HEK293 (cell line): ENCODE measurements at regions of chr1 and their contacts with region 1.

Region 1: DNA sequence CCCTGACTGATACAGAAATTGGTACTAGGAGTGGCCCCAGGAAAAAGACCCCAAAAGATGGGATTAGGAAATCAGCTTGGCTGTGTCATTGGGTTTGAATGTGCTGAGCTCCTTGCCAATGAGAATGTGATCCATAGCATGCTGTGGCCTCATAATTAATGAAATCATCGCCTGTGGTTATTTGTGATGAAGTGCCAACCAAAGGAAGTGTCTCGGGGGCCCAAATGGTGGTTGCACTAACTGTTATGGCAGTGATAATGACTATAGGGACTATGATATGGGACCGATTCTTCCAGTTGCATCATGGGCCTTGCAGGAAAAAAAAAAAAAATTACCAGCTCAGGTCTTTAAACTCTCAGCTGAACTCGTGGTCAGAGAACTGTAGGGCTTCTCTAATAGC is 15.4 kb upstream of the ZDHHC18 start:
- H3K4me3 ChIP-seq: no peak overlapping the region
- H3K27ac ChIP-seq: no peak overlapping the region
- H3K4me1 ChIP-seq: no peaks in the 10 kb centered on the region
- CTCF ChIP-seq: no peak

Region 2: DNA sequence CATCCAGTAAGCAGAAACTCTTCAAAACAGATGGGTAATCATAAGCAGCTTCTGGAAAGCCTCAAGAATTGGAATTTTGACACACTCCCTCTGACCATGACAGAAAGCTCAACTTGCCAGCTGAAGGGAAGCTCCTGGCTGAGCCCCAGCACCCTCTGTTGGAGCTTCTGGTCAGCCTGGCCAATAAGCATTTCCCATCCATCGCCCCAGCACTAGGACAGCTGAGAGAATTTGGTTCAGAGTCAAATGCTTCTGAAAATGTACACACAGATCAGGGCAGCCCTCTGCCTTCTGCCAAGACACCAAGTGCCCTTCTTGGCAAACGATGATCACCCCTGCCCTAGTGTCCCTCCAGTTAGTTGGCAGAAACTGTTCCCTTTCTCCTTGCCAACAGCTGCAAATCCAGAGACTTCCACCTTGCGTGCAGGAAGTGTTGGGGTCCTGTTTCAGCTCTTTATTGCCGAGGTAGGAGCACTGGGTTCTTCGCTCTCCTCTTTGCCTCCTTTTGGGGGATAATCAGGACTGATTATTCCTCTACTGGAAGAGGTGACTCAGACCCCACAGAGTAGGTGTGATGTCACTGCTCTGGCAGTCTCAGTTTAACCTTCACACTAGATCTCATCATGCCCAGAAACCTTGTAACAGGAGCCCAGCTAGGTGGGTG is 11.4 kb before region 1 on chr1:
- CTCF ChIA-PET with region 1: interaction called, 54 read pairs
- POLR2A ChIA-PET with region 1: interaction called, 4 read pairs
- H3K4me3 ChIP-seq: no peak overlapping the region
- H3K27ac ChIP-seq: no peak overlapping the region
- H3K4me1 ChIP-seq: peaks cover 3% of the 10 kb centered on the region; the same call in 1 of the 2 replicates
- CTCF ChIP-seq: no peak; the same call in 1 of the 2 replicates

Region 3: GRCh38 chr1:26874896-26875295 is 63.8 kb after region 1 on chr1:
- CTCF ChIA-PET with region 1: interaction called, 15 read pairs
- POLR2A ChIA-PET with region 1: no interaction called
- H3K4me3 ChIP-seq: no peak overlapping the region
- H3K27ac ChIP-seq: no peak overlapping the region
- H3K4me1 ChIP-seq: no peaks in the 10 kb centered on the region
- CTCF ChIP-seq: no peak